ENCODE measurements at regions of chr2 and their contacts with region 1.

Region 1: GRCh38 chr2:96305091-96305978 is at the start of gene SNRNP200:
- DNase-seq: peak; percentile 78 to 97 (median 91)
- ATAC-seq: peak; percentile 82
- H3K4me3 ChIP-seq: peak within 1 kb of the TSS; percentile 84 to 95
- H3K4me3 Mint-ChIP-seq: peak within 1 kb of the TSS; percentile 100
- H3K27ac ChIP-seq: peak within 1 kb of the TSS; percentile 96 to 98
- H3K27ac Mint-ChIP-seq: peak within 1 kb of the TSS; percentile 100
- H3K4me1 ChIP-seq: peaks cover 39% of the 10 kb centered on the region
- H3K4me1 Mint-ChIP-seq: peaks cover 55% of the 10 kb centered on the region
- H3K27me3 ChIP-seq: no peaks in the 10 kb centered on the region
- H3K27me3 Mint-ChIP-seq: no peaks in the 10 kb centered on the region
- CTCF ChIP-seq: no peak
- total RNA-seq, gene SNRNP200: 318 to 348 TPM

Region 2: GRCh38 chr2:96072746-96073145 is 232.6 kb before region 1 on chr2:
- CTCF ChIA-PET with region 1: no interaction called
- POLR2A ChIA-PET with region 1: no interaction called
- intact Hi-C with region 1: no loop called
- DNase-seq: peak in 1 of 9 experiments; percentile 19
- ATAC-seq: no peak
- H3K4me3 ChIP-seq: no peak overlapping the region
- H3K4me3 Mint-ChIP-seq: no peak overlapping the region
- H3K27ac ChIP-seq: no peak overlapping the region
- H3K27ac Mint-ChIP-seq: no peak overlapping the region
- H3K4me1 ChIP-seq: no peaks in the 10 kb centered on the region
- H3K4me1 Mint-ChIP-seq: no peaks in the 10 kb centered on the region
- H3K27me3 ChIP-seq: no peaks in the 10 kb centered on the region
- H3K27me3 Mint-ChIP-seq: peaks cover 2% of the 10 kb centered on the region
- CTCF ChIP-seq: no peak

Region 3: GRCh38 chr2:96145036-96145847 is 160.1 kb before region 1 on chr2 and contains the start of gene DUSP2:
- CTCF ChIA-PET with region 1: no interaction called
- POLR2A ChIA-PET with region 1: no interaction called
- intact Hi-C with region 1: loop called (anchors 2 to 5 kb)
- DNase-seq: peak; percentile 80 to 97 (median 91)
- ATAC-seq: peak; percentile 37
- H3K4me3 ChIP-seq: peak within 1 kb of the TSS; percentile 91 to 96
- H3K4me3 Mint-ChIP-seq: peak within 1 kb of the TSS; percentile 94
- H3K27ac ChIP-seq: peak within 1 kb of the TSS; percentile 98 to 99
- H3K27ac Mint-ChIP-seq: peak within 1 kb of the TSS; percentile 94
- H3K4me1 ChIP-seq: peaks cover 61% of the 10 kb centered on the region
- H3K4me1 Mint-ChIP-seq: peaks cover 57% of the 10 kb centered on the region
- H3K27me3 ChIP-seq: no peaks in the 10 kb centered on the region
- H3K27me3 Mint-ChIP-seq: no peaks in the 10 kb centered on the region
- CTCF ChIP-seq: no peak
- total RNA-seq, gene DUSP2: 1,304 to 1,350 TPM

Region 4: DNA sequence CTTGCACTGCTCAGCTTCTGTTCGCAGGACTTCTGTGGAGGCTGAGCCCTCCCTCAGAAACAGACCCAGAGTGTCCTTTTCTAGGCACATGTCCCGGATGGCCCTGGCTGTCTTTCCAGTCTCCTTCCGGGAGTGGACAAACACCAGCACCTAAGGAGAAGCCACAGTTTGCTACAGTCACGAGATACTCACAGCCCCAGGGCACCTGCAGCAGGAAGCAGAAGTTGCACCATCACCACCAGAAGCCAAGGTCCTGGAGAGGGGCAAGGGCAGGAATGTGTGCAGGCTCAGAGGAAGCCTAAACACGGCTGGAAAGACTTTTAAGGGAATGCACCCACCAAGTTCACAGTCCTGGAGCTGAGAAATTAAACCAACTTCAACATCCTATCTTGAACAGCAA is 13.6 kb before region 1 on chr2:
- CTCF ChIA-PET with region 1: no interaction called
- POLR2A ChIA-PET with region 1: no interaction called
- intact Hi-C with region 1: no loop called
- DNase-seq: no peak
- ATAC-seq: no peak
- H3K4me3 ChIP-seq: no peak overlapping the region
- H3K4me3 Mint-ChIP-seq: no peak overlapping the region
- H3K27ac ChIP-seq: no peak overlapping the region
- H3K27ac Mint-ChIP-seq: no peak overlapping the region
- H3K4me1 ChIP-seq: no peaks in the 10 kb centered on the region
- H3K4me1 Mint-ChIP-seq: no peaks in the 10 kb centered on the region
- H3K27me3 ChIP-seq: no peaks in the 10 kb centered on the region
- H3K27me3 Mint-ChIP-seq: no peaks in the 10 kb centered on the region
- CTCF ChIP-seq: no peak

Region 5: GRCh38 chr2:96320728-96321622 is 15.6 kb after region 1 on chr2:
- CTCF ChIA-PET with region 1: interaction called, 4 read pairs
- POLR2A ChIA-PET with region 1: interaction called, 51 read pairs
- intact Hi-C with region 1: loop called (anchors 1 kb)
- DNase-seq: peak in 2 of 9 experiments; percentile 26 to 38
- ATAC-seq: no peak
- H3K4me3 ChIP-seq: peak overlapping the region; percentile 81 to 85
- H3K4me3 Mint-ChIP-seq: peak overlapping the region; percentile 92
- H3K27ac ChIP-seq: peak overlapping the region; percentile 38 to 71
- H3K27ac Mint-ChIP-seq: peak overlapping the region; percentile 90
- H3K4me1 ChIP-seq: peaks cover 28% of the 10 kb centered on the region
- H3K4me1 Mint-ChIP-seq: peaks cover 55% of the 10 kb centered on the region
- H3K27me3 ChIP-seq: no peaks in the 10 kb centered on the region
- H3K27me3 Mint-ChIP-seq: no peaks in the 10 kb centered on the region
- CTCF ChIP-seq: no peak

Region 6: GRCh38 chr2:96336104-96336775 is 30.9 kb after region 1 on chr2:
- CTCF ChIA-PET with region 1: interaction called, 3 read pairs
- POLR2A ChIA-PET with region 1: interaction called, 13 read pairs
- intact Hi-C with region 1: loop called (anchors 1 kb)
- DNase-seq: no peak
- ATAC-seq: no peak
- H3K4me3 ChIP-seq: peak overlapping the region; percentile 42 to 83
- H3K4me3 Mint-ChIP-seq: peak overlapping the region; percentile 85
- H3K27ac ChIP-seq: no peak overlapping the region
- H3K27ac Mint-ChIP-seq: peak overlapping the region; percentile 63
- H3K4me1 ChIP-seq: peaks cover 14% of the 10 kb centered on the region
- H3K4me1 Mint-ChIP-seq: peaks cover 29% of the 10 kb centered on the region
- H3K27me3 ChIP-seq: no peaks in the 10 kb centered on the region
- H3K27me3 Mint-ChIP-seq: no peaks in the 10 kb centered on the region
- CTCF ChIP-seq: no peak

Region 7: GRCh38 chr2:96344011-96344410 is 38.7 kb after region 1 on chr2:
- CTCF ChIA-PET with region 1: interaction called, 9 read pairs
- POLR2A ChIA-PET with region 1: interaction called, 8 read pairs
- intact Hi-C with region 1: loop called in 1 of 2 experiments (anchors 1 kb)
- DNase-seq: peak in 8 of 9 experiments; percentile 29 to 84 (median 62)
- ATAC-seq: peak; percentile 78
- H3K4me3 ChIP-seq: no peak overlapping the region
- H3K4me3 Mint-ChIP-seq: no peak overlapping the region
- H3K27ac ChIP-seq: peak overlapping the region; percentile 19 to 63
- H3K27ac Mint-ChIP-seq: peak overlapping the region; percentile 80
- H3K4me1 ChIP-seq: peaks cover 16% of the 10 kb centered on the region
- H3K4me1 Mint-ChIP-seq: peaks cover 40% of the 10 kb centered on the region
- H3K27me3 ChIP-seq: no peaks in the 10 kb centered on the region
- H3K27me3 Mint-ChIP-seq: no peaks in the 10 kb centered on the region
- CTCF ChIP-seq: no peak

Region 8: DNA sequence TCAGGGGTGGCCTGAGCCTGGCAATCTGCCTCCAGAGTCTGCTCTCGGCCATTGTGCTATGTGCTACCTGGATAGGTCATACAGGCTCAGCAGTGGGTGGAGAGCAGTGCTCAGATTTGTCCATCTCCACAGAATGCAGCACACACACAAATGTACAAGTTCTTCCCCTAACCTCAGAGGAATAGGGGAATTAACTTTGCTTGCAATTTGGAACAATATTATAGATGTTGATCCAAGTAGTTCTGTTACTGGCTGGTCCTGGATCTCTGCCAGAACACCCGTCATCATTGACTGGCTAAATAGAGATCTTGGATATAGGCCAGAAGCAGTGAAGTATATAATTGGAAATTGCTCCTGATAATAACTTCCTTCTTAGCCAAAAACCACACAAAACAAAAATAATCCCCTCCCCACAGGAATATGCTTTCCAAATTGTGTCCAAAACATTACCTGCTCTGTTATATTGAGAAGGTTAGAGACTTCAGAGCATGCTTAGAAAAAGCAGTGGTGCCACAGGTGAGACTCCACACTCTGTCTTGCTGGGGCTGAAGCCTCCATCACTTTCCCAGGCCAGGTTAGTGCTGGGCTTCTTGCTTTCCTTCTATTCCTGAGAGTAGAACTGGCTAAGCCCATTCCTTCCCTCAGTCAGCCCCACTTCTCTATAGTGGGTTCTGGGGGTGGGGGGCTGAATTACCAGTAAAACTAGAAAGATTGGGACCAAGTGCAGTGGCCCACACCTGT is 69.0 kb after region 1 on chr2:
- CTCF ChIA-PET with region 1: no interaction called
- POLR2A ChIA-PET with region 1: no interaction called
- intact Hi-C with region 1: no loop called
- DNase-seq: no peak
- ATAC-seq: no peak
- H3K4me3 ChIP-seq: no peak overlapping the region
- H3K4me3 Mint-ChIP-seq: no peak overlapping the region
- H3K27ac ChIP-seq: no peak overlapping the region
- H3K27ac Mint-ChIP-seq: no peak overlapping the region
- H3K4me1 ChIP-seq: no peaks in the 10 kb centered on the region
- H3K4me1 Mint-ChIP-seq: no peaks in the 10 kb centered on the region
- H3K27me3 ChIP-seq: no peaks in the 10 kb centered on the region
- H3K27me3 Mint-ChIP-seq: no peaks in the 10 kb centered on the region
- CTCF ChIP-seq: no peak

Region 9: DNA sequence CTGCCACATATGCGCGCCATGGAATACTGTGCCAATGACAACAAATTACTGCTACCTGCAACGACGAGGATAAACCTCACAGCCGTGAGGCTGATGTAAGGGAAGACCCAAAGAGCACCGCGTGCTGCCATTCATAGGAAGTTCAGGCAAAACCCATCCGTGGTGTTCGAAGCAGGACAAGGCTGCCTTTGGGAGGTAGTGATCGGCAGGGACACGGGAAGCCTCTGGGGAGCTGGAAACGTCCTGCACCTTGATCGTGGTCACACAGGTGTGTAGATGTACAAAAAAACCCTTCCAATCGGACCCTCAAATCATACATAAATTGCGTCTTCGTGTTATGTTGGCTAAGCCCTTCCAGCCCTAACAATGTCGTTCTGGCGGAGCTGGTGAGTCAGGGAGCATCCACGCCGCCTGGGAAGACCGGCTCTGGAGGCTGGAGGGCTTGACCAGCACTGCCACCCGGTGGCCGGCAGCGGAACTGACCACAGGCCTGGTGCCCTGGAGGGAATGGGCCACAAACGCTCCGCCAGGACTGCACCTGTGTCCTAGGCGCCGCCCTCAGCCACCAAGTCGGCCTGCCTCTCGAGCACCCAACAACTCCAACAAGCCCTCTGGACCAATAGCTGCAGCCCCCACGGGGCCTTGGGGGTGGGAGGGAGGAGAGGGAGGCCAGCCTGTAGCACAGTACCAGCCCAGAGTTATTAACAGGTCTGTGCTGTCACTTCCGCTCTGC is 203.9 kb after region 1 on chr2:
- CTCF ChIA-PET with region 1: interaction called, 6 read pairs
- POLR2A ChIA-PET with region 1: no interaction called
- intact Hi-C with region 1: loop called in 1 of 2 experiments (anchors 2 kb)
- DNase-seq: peak in 8 of 9 experiments; percentile 35 to 73 (median 56)
- ATAC-seq: no peak
- H3K4me3 ChIP-seq: no peak overlapping the region
- H3K4me3 Mint-ChIP-seq: no peak overlapping the region
- H3K27ac ChIP-seq: no peak overlapping the region
- H3K27ac Mint-ChIP-seq: no peak overlapping the region
- H3K4me1 ChIP-seq: peaks cover 17% of the 10 kb centered on the region
- H3K4me1 Mint-ChIP-seq: peaks cover 10% of the 10 kb centered on the region
- H3K27me3 ChIP-seq: peaks cover 0 to 5% of the 10 kb centered on the region in 2 experiments
- H3K27me3 Mint-ChIP-seq: peaks cover 13% of the 10 kb centered on the region
- CTCF ChIP-seq: peak; percentile 45

Region 10: GRCh38 chr2:96638144-96639121 is 333.1 kb after region 1 on chr2 and contains the start of gene KANSL3:
- CTCF ChIA-PET with region 1: no interaction called
- POLR2A ChIA-PET with region 1: no interaction called
- intact Hi-C with region 1: loop called in 1 of 2 experiments (anchors 5 kb)
- DNase-seq: peak; percentile 79 to 95 (median 88)
- ATAC-seq: peak; percentile 85
- H3K4me3 ChIP-seq: peak within 1 kb of the TSS; percentile 71 to 95
- H3K4me3 Mint-ChIP-seq: peak within 1 kb of the TSS; percentile 93
- H3K27ac ChIP-seq: peak within 1 kb of the TSS; percentile 83 to 91
- H3K27ac Mint-ChIP-seq: peak within 1 kb of the TSS; percentile 96
- H3K4me1 ChIP-seq: peaks cover 24% of the 10 kb centered on the region
- H3K4me1 Mint-ChIP-seq: peaks cover 32% of the 10 kb centered on the region
- H3K27me3 ChIP-seq: no peaks in the 10 kb centered on the region
- H3K27me3 Mint-ChIP-seq: peaks cover 2% of the 10 kb centered on the region
- CTCF ChIP-seq: no peak
- total RNA-seq, gene KANSL3: 58.8 to 60.4 TPM